CD14-positive monocyte (primary cell): ENCODE measurements at regions of chr9 and their contacts with region 1.

Region 1: DNA sequence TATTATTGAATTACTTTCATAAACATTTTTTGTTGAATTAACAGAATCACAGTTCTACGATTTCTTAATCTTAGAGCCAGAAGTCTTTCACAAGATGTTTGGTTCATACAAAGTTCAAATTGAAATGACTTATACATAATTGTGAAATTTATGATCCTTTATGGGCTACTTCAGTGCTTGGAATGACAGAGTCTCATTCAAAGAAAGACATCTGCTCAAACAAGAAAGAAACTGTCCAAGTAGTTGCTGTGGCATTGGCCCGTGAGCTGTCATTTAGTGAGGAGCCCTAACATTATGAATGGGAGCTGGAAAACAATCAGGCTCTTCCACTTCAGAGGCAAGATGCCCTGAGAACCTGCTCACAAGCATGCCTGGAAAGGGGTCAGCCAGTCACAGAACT is 63.4 kb downstream of the AUH start:
- DNase-seq: peak; percentile 68 to 88 (median 77)
- H3K4me3 ChIP-seq: peak overlapping the region in 1 of 3 experiments; percentile 36
- H3K4me3 Mint-ChIP-seq: peak overlapping the region; percentile 56 to 73
- H3K27ac ChIP-seq: peak overlapping the region; percentile 67 to 71
- H3K27ac Mint-ChIP-seq: peak overlapping the region; percentile 90 to 97 (median 96)
- H3K4me1 ChIP-seq: peaks cover 40 to 63% of the 10 kb centered on the region in 2 donors
- H3K4me1 Mint-ChIP-seq: peaks cover 60% of the 10 kb centered on the region
- H3K27me3 ChIP-seq: no peaks in the 10 kb centered on the region
- H3K27me3 Mint-ChIP-seq: peaks cover 0 to 3% (median 0%) of the 10 kb centered on the region in 3 donors
- CTCF ChIP-seq: no peak

Region 2: DNA sequence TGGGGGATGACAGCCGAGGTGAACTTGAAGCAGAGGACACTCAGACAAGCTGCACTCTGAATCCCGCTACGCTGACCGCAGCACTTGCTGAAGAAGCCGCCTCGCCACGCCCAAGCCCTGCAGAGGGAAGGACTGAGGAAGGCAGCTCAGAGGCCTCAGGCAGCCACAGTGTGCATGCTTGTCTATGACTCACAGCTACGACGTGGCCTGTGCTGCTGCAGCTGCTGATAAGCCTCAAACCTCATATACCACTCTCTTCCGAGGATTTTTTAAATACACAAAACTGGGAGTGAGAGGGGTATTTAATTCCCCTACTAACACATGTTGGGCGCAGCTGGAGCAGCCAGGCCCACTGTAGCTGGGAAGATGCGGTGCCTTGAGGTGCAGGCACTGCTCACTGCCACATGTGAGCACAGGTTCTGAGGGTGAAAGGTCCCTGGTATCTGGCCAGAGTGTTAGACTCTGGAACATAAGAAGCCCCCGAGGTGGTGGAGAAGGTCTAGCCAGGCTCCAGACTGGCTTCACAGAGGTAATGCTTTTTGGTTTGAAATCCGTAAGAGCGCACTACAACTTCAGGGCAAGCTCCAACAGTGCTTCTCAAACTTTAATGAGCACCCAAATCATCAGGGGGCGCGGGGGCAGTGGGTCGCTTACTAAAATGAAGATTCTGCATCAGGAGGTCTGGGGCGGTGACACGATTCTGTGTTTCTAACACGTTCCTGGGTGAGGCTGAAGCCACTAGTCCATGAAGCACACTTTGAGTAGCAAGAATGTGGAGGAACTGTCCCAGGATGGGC is 133.4 kb before region 1 on chr9:
- intact Hi-C with region 1: loop called in 1 of 2 experiments (anchors 10 kb)
- DNase-seq: peak; percentile 95 to 96 (median 96)
- H3K4me3 ChIP-seq: peak overlapping the region in 1 of 3 experiments; percentile 28
- H3K4me3 Mint-ChIP-seq: peak overlapping the region; percentile 64 to 72
- H3K27ac ChIP-seq: peak overlapping the region; percentile 11 to 73
- H3K27ac Mint-ChIP-seq: peak overlapping the region; percentile 40 to 97 (median 83)
- H3K4me1 ChIP-seq: peaks cover 39 to 44% of the 10 kb centered on the region in 2 donors
- H3K4me1 Mint-ChIP-seq: peaks cover 41% of the 10 kb centered on the region
- H3K27me3 ChIP-seq: no peaks in the 10 kb centered on the region
- H3K27me3 Mint-ChIP-seq: peaks cover 0 to 5% (median 4%) of the 10 kb centered on the region in 3 donors
- CTCF ChIP-seq: no peak

Region 3: GRCh38 chr9:91207729-91208418 is 90.4 kb before region 1 on chr9:
- intact Hi-C with region 1: loop called in 1 of 2 experiments (anchors 5 kb)
- DNase-seq: peak; percentile 89 to 95 (median 91)
- H3K4me3 ChIP-seq: peak overlapping the region in 1 of 3 experiments; percentile 51
- H3K4me3 Mint-ChIP-seq: peak overlapping the region; percentile 51 to 81
- H3K27ac ChIP-seq: peak overlapping the region; percentile 74 to 88
- H3K27ac Mint-ChIP-seq: peak overlapping the region; percentile 93 to 98 (median 96)
- H3K4me1 ChIP-seq: peaks cover 30 to 34% of the 10 kb centered on the region in 2 donors
- H3K4me1 Mint-ChIP-seq: peaks cover 38% of the 10 kb centered on the region
- H3K27me3 ChIP-seq: no peaks in the 10 kb centered on the region
- H3K27me3 Mint-ChIP-seq: peaks cover 0 to under 1% (median 0%) of the 10 kb centered on the region in 3 donors
- CTCF ChIP-seq: no peak

Region 4: GRCh38 chr9:91261417-91261816 is 36.9 kb before region 1 on chr9:
- intact Hi-C with region 1: loop called (anchors 5 kb)
- DNase-seq: peak in 2 of 3 donors; percentile 18 to 20
- H3K4me3 ChIP-seq: no peak overlapping the region
- H3K4me3 Mint-ChIP-seq: no peak overlapping the region
- H3K27ac ChIP-seq: peak overlapping the region in 1 of 2 donors; percentile 30
- H3K27ac Mint-ChIP-seq: peak overlapping the region in 4 of 7 donors; percentile 0 to 58 (median 4)
- H3K4me1 ChIP-seq: peaks cover 22 to 31% of the 10 kb centered on the region in 2 donors
- H3K4me1 Mint-ChIP-seq: peaks cover 28% of the 10 kb centered on the region
- H3K27me3 ChIP-seq: no peaks in the 10 kb centered on the region
- H3K27me3 Mint-ChIP-seq: no peaks in the 10 kb centered on the region
- CTCF ChIP-seq: no peak

Region 5: DNA sequence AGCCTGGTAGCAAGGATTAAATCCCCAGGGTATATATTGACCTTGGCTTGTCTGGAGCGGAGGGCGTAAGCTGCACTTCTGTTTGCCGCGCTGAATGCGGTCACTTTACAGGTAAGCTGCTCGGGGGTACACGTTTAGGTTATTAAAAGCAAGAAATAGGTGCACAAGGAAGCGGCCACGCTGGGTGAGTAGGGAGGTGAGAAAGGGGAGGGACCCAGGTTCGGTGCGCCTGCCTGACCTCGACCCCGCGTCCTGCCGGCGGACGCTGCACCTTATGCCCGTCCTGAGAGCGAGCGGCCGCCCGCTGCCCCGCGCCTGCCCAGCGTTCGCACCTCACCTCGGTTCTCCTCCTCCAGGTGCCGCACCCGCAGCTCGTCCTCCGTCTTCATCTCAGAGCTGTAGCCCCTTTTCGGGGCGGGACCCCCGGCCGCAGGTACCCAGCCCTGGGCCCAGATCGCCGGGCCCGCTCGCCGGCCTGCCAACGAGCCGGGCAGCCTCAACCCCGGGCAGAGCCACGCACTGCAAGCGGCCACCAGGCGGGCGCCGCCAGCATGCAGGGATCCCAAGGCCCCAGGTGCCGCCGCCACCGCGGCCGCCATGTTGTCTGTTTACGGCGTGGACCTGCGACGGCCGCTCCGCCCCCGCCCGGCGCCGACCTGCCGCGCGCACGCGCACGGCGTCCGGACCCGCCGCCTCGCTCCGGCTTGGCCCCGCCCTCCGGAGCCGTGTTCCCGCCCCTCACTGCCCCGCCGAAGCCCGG is 63.2 kb after region 1 on chr9 and contains the start of gene AUH:
- intact Hi-C with region 1: loop called in 1 of 2 experiments (anchors 10 kb)
- DNase-seq: peak; percentile 66 to 82 (median 78)
- H3K4me3 ChIP-seq: peak within 1 kb of the TSS; percentile 74 to 89 (median 83)
- H3K4me3 Mint-ChIP-seq: peak within 1 kb of the TSS; percentile 99
- H3K27ac ChIP-seq: peak within 1 kb of the TSS in 1 of 2 donors; percentile 77
- H3K27ac Mint-ChIP-seq: peak within 1 kb of the TSS; percentile 78 to 92 (median 89)
- H3K4me1 ChIP-seq: peaks cover 16 to 21% of the 10 kb centered on the region in 2 donors
- H3K4me1 Mint-ChIP-seq: peaks cover 24% of the 10 kb centered on the region
- H3K27me3 ChIP-seq: no peaks in the 10 kb centered on the region
- H3K27me3 Mint-ChIP-seq: peaks cover 0 to 1% (median 0%) of the 10 kb centered on the region in 3 donors
- CTCF ChIP-seq: no peak
- polyA plus RNA-seq, gene AUH: 4.0 to 9.9 (median 8.4) TPM